ENCODE measurements at regions of chr12 and their contacts with region 1.

Region 1: DNA sequence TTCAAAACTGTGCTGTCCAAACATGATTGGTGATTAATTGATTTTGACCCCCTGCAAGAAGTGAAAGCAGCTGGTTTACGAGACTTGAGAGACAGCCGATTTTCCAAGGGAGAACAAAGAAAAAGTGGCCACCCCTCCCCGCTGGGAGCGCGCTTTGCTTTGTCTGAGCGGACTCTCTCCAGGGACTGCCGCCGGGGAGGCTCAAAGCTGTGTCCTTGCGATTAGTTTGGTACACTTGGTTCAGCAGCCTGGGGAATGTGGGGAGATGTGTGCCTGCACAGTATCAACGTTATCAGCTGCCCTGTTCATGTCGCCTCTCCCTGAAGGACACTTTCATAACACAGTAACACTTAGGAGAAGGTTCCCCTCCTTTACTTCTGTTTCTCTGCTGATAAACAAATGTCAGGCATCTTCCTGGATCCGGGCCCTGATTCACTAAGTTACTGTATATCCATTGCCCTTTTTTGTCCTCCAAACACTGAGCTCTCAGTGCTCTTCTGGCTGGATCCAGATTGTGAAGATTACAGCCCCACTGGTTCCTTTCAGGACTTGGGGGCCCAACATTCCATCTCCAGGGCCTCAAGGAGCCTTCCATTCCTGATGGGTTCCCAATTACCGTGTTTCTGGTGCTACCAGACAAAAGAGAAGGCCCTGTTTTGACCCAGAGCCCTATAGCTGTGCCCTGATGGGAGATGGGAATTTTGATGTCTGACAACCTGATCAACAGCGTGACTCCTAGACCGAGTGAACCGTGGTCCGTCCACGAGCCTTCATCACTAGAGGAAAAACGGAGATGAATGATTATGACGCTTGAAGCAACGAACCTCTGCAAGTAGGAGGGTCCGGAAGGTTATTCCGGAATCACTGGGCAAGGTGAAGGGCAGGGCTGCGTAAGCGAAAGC is 31.7 kb upstream of the TUBA1C start:
- DNase-seq: no peak
- ATAC-seq: no peak
- H3K4me3 Mint-ChIP-seq: peak overlapping the region; percentile 76
- H3K27ac Mint-ChIP-seq: peak overlapping the region; percentile 83
- H3K4me1 Mint-ChIP-seq: peaks cover 20% of the 10 kb centered on the region
- H3K27me3 Mint-ChIP-seq: no peaks in the 10 kb centered on the region

Region 2: DNA sequence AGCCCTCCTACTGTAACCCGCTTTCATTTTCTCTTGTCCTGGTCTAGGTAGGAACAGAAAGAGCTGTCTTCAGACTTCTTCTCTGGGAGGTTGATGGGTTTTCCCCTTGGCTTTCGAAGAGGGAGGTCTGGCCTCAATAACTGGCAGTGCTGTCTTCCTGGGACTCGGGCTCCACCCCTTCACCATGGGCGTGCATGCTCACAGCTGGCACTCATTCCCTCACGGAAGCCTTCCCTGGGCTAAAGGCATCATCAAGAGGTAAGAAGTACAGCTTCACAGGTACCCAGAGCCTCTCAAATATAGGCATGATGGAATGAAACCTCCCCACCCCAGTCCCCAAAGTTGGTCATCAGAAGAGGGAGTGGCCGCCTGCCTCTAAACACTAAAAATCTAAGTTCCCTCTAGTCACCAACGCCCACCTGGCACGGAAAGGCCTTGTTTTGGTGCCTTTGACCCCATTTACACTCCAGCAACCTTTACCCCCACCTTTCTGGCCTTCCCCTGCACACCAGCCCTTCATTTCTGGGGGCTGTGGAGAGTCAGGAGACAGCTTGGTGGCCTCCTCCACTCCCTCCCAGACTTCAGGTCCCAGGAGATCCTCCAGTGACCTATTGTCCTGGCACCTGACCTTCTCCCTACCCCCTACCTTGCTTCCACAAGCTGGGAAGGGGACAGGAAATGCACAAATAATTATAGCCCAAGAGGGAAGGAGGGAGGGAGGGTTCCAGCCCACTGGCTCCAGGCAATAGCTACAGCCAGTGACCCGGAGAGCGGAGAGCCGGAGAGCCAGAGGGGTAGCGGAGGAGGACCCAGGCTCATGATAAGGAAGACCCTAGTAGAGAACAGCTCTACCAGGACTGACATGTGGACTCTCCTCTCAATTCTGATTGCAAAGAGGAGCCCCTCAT is 1477.3 kb before region 1 on chr12:
- CTCF ChIA-PET with region 1: no interaction called
- POLR2A ChIA-PET with region 1: no interaction called
- intact Hi-C with region 1: no loop called
- DNase-seq: peak; percentile 58
- ATAC-seq: peak; percentile 71
- H3K4me3 Mint-ChIP-seq: no peak overlapping the region
- H3K27ac Mint-ChIP-seq: peak overlapping the region; percentile 49
- H3K4me1 Mint-ChIP-seq: peaks cover 45% of the 10 kb centered on the region
- H3K27me3 Mint-ChIP-seq: no peaks in the 10 kb centered on the region

Region 3: DNA sequence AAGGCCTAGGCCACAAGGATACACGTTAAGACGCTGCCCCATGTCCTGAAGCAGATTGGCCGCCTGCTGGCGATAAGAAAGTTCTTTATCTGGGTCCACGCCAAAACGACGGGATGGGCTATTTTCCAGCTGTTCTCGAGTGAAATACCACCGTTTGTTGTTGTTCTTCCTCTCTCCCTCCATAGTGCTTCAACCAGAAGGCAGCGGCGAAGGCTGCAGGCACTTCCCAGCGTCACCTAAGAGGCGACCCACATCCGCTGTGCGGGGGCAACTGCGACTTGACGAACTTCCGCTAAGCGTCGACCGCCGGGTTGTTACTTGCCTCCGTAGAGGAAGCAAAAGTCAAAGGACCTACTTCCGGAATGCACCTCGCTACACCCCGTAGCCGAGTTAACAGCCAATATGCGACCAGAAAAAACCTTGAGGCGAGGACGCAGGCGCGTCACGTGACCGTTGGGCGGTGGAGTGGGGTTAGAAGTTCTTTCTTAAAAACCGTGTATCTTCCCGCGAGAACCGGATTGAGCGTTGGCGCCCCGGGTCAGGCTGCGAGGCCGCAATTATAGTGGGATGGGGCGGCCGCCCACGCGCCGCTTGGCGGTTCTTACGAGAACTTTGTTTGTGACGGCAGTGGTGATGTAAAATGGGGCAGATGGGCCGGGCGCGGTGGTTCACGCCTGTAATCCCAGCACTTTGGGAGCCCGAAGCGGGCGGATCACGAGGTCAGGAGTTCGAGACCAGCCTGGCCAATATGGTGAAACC is 516.5 kb before region 1 on chr12 and contains the start of gene CCNT1:
- CTCF ChIA-PET with region 1: no interaction called
- POLR2A ChIA-PET with region 1: no interaction called
- intact Hi-C with region 1: loop called in 1 of 2 experiments (anchors 1 kb)
- DNase-seq: peak; percentile 100
- ATAC-seq: peak; percentile 95
- H3K4me3 Mint-ChIP-seq: peak within 1 kb of the TSS; percentile 99
- H3K27ac Mint-ChIP-seq: peak within 1 kb of the TSS; percentile 99
- H3K4me1 Mint-ChIP-seq: peaks cover 37% of the 10 kb centered on the region
- H3K27me3 Mint-ChIP-seq: no peaks in the 10 kb centered on the region
- total RNA-seq, gene CCNT1: 82.2 to 85.1 TPM

Region 4: GRCh38 chr12:48882315-48882687 is 350.9 kb before region 1 on chr12:
- CTCF ChIA-PET with region 1: no interaction called
- POLR2A ChIA-PET with region 1: no interaction called
- intact Hi-C with region 1: no loop called
- DNase-seq: no peak
- ATAC-seq: no peak
- H3K4me3 Mint-ChIP-seq: no peak overlapping the region
- H3K27ac Mint-ChIP-seq: no peak overlapping the region
- H3K4me1 Mint-ChIP-seq: peaks cover 7% of the 10 kb centered on the region
- H3K27me3 Mint-ChIP-seq: peaks cover 22% of the 10 kb centered on the region

Region 5: GRCh38 chr12:49060237-49061156 is 172.7 kb before region 1 on chr12 and contains the start of gene KMT2D:
- CTCF ChIA-PET with region 1: interaction called, 13 read pairs
- POLR2A ChIA-PET with region 1: interaction called, 6 read pairs
- intact Hi-C with region 1: loop called in 1 of 2 experiments (anchors 1 kb)
- DNase-seq: peak; percentile 94
- ATAC-seq: peak; percentile 75
- H3K4me3 Mint-ChIP-seq: peak within 1 kb of the TSS; percentile 98
- H3K27ac Mint-ChIP-seq: peak within 1 kb of the TSS; percentile 95
- H3K4me1 Mint-ChIP-seq: peaks cover 45% of the 10 kb centered on the region
- H3K27me3 Mint-ChIP-seq: no peaks in the 10 kb centered on the region
- total RNA-seq, gene KMT2D: 48.3 to 58.2 TPM

Region 6: DNA sequence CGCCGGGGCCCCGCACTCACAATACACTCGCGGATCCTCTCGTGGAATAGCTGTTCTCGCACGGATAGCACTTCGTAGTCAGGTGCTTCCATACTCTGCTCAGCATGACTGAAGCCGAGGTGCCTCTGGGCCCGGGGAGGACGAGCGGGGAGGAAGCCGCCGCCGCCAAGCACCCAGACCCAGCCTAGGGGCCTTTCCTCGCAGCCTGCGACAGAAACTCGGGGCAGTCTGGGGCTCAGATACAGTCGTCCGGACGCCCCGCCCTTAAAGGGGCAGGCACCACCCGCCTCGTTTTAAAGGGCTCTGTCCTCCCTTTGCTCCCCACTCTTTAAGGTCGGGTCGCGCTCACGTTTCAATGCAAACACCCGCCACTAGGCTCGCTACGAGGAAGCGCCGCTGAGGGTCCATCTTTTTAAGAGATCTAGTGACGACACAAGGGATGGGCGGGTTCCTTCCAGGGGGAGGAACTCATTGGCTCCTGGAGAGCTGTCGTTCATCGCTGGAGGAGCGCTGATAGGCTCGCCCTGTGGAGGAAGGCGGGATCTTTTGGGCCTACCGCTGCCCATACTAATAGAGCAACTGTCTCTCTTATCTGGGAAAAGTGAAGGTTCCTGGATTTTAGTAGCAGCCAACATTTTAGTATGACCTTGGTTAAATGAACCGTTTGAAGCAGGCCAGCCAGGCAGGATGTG is 122.6 kb before region 1 on chr12 and contains the start of gene LMBR1L:
- CTCF ChIA-PET with region 1: interaction called, 3 read pairs
- POLR2A ChIA-PET with region 1: no interaction called
- intact Hi-C with region 1: loop called in 1 of 2 experiments (anchors 1 kb)
- DNase-seq: peak; percentile 97
- ATAC-seq: peak; percentile 98
- H3K4me3 Mint-ChIP-seq: peak within 1 kb of the TSS; percentile 96
- H3K27ac Mint-ChIP-seq: peak within 1 kb of the TSS; percentile 98
- H3K4me1 Mint-ChIP-seq: peaks cover 29% of the 10 kb centered on the region
- H3K27me3 Mint-ChIP-seq: no peaks in the 10 kb centered on the region
- total RNA-seq, gene LMBR1L: 45.0 to 48.0 TPM

Region 7: GRCh38 chr12:49567611-49568441 is 334.6 kb after region 1 on chr12 and contains the start of gene MCRS1:
- CTCF ChIA-PET with region 1: no interaction called
- POLR2A ChIA-PET with region 1: no interaction called
- intact Hi-C with region 1: loop called in 1 of 2 experiments (anchors 1 kb)
- DNase-seq: peak; percentile 93
- ATAC-seq: peak; percentile 88
- H3K4me3 Mint-ChIP-seq: peak within 1 kb of the TSS; percentile 90
- H3K27ac Mint-ChIP-seq: peak within 1 kb of the TSS; percentile 95
- H3K4me1 Mint-ChIP-seq: peaks cover 37% of the 10 kb centered on the region
- H3K27me3 Mint-ChIP-seq: no peaks in the 10 kb centered on the region
- total RNA-seq, gene MCRS1: 48.2 to 58.2 TPM

Measured in activated CD4-positive, alpha-beta T cell treated with anti-CD3 and anti-CD28 coated beads for 36 hours (primary cell).